ENCODE measurements at regions of chr12 and their contacts with region 1.

Region 1: GRCh38 chr12:48795480-48796455 is 6.9 kb upstream of the ADCY6 start:
- DNase-seq: peak in 8 of 9 donors; percentile 14 to 62 (median 48)
- ATAC-seq: peak; percentile 89
- H3K4me3 ChIP-seq: no peak overlapping the region
- H3K4me3 Mint-ChIP-seq: no peak overlapping the region
- H3K27ac ChIP-seq: no peak overlapping the region
- H3K27ac Mint-ChIP-seq: peak overlapping the region in 1 of 9 donors; percentile 52
- H3K4me1 ChIP-seq: no peaks in the 10 kb centered on the region
- H3K4me1 Mint-ChIP-seq: peaks cover 0 to 10% (median 4%) of the 10 kb centered on the region in 7 donors
- H3K27me3 ChIP-seq: no peaks in the 10 kb centered on the region
- H3K27me3 Mint-ChIP-seq: peaks cover 0 to 16% (median 3%) of the 10 kb centered on the region in 5 donors

Region 2: DNA sequence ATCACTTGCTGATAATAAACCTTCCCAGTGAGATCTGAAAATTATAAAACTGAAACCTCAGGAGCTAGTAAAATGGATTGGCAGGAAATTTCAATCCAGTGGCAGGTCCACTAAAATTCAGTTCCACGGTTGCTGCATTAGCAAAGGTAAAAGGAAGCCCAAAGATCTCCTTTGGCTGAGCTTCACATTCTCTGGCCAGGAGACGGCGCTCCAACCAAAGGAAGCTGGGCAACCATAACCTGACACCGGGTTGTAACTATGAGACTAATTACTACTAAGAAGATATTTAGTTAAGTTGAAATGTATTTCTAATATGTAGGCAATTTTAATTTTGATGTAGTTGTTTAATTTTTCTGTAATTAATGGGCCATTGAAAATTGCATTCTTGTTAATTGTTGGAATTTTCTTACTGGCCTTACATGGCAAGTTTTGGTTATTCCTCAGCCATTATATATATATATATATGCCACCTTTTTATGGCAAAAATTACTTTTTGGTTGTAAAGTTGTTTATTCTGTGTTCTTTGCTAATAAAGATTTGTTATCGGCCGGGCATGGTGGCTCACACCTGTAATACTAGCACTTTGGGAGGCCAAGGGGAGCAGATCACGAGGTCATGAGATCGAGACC is 253.4 kb before region 1 on chr12:
- CTCF ChIA-PET with region 1: interaction called, 8 read pairs
- POLR2A ChIA-PET with region 1: no interaction called
- intact Hi-C with region 1: loop called in 1 of 2 experiments (anchors 5 kb)
- DNase-seq: peak in 8 of 9 donors; percentile 22 to 45 (median 34)
- ATAC-seq: peak; percentile 47
- H3K4me3 ChIP-seq: no peak overlapping the region
- H3K4me3 Mint-ChIP-seq: no peak overlapping the region
- H3K27ac ChIP-seq: no peak overlapping the region
- H3K27ac Mint-ChIP-seq: no peak overlapping the region
- H3K4me1 ChIP-seq: no peaks in the 10 kb centered on the region
- H3K4me1 Mint-ChIP-seq: peaks cover 0 to 4% (median 0%) of the 10 kb centered on the region in 7 donors
- H3K27me3 ChIP-seq: no peaks in the 10 kb centered on the region
- H3K27me3 Mint-ChIP-seq: peaks cover 0 to 6% (median 3%) of the 10 kb centered on the region in 5 donors

Region 3: DNA sequence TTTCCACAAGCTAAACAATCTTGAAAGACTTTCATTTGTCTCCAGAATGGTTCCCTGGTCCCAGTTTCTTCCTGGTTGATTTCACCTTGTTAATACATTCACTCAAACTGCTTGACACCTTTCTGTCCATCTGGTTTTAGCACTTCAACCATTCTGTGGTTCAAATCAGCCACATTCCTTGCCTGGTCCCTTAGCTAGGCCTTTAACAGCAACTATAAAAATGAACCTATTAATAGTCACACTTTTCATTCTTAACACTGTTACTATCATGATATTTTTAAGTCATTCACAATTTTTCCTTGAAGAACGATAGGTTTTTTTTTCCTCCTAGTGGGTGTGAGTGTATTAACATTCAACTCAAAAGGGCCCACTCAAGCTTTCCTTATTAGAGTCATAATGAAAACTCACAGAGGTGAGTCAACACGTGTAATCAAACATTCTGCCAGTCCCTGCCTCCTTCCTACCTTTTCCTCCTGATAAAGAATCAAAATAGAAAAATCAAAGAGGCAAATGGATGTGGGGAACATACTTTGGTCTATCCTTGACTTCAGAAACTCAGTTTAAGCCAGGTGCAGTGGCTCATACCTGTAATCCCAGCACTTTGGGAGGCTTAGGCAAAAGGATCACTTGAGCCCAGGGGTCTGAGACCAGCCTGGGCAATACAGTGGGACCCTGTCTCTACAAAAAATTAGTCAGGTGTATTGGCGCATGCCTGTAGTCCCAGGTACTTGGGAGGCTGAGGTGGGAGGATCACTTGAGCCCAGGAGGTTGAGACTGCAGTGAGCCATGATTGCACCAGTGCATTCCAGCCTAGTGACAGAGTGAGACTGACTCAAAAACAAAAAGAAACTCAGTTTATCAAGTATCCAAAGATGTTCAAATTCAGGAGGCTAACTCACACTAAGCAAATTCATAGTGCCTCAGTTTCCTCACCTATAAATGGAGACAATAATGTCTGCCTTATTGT is 44.7 kb before region 1 on chr12:
- CTCF ChIA-PET with region 1: interaction called, 58 read pairs
- POLR2A ChIA-PET with region 1: interaction called, 7 read pairs
- intact Hi-C with region 1: loop called (anchors 1 kb)
- DNase-seq: no peak
- ATAC-seq: no peak
- H3K4me3 ChIP-seq: no peak overlapping the region
- H3K4me3 Mint-ChIP-seq: no peak overlapping the region
- H3K27ac ChIP-seq: no peak overlapping the region
- H3K27ac Mint-ChIP-seq: peak overlapping the region in 1 of 9 donors; percentile 20
- H3K4me1 ChIP-seq: no peaks in the 10 kb centered on the region
- H3K4me1 Mint-ChIP-seq: peaks cover 0 to 1% (median 0%) of the 10 kb centered on the region in 7 donors
- H3K27me3 ChIP-seq: no peaks in the 10 kb centered on the region
- H3K27me3 Mint-ChIP-seq: peaks cover 0 to 11% (median 0%) of the 10 kb centered on the region in 5 donors

Region 4: GRCh38 chr12:48758221-48758620 is 37.5 kb before region 1 on chr12:
- CTCF ChIA-PET with region 1: interaction called, 58 read pairs
- POLR2A ChIA-PET with region 1: interaction called, 7 read pairs
- intact Hi-C with region 1: loop called (anchors 1 kb)
- DNase-seq: no peak
- ATAC-seq: no peak
- H3K4me3 ChIP-seq: no peak overlapping the region
- H3K4me3 Mint-ChIP-seq: no peak overlapping the region
- H3K27ac ChIP-seq: no peak overlapping the region
- H3K27ac Mint-ChIP-seq: no peak overlapping the region
- H3K4me1 ChIP-seq: no peaks in the 10 kb centered on the region
- H3K4me1 Mint-ChIP-seq: peaks cover 0 to 1% (median 0%) of the 10 kb centered on the region in 7 donors
- H3K27me3 ChIP-seq: no peaks in the 10 kb centered on the region
- H3K27me3 Mint-ChIP-seq: peaks cover 0 to 3% (median 0%) of the 10 kb centered on the region in 5 donors

Region 5: GRCh38 chr12:48814262-48815125 is 18.7 kb after region 1 on chr12:
- CTCF ChIA-PET with region 1: interaction called, 3 read pairs
- POLR2A ChIA-PET with region 1: no interaction called
- intact Hi-C with region 1: loop called in 1 of 2 experiments (anchors 2 kb)
- DNase-seq: peak; percentile 18 to 93 (median 47)
- ATAC-seq: peak; percentile 86
- H3K4me3 ChIP-seq: peak overlapping the region; percentile 59
- H3K4me3 Mint-ChIP-seq: peak overlapping the region; percentile 58 to 95 (median 91)
- H3K27ac ChIP-seq: no peak overlapping the region
- H3K27ac Mint-ChIP-seq: peak overlapping the region in 4 of 9 donors; percentile 32 to 85 (median 66)
- H3K4me1 ChIP-seq: peaks cover 7 to 19% of the 10 kb centered on the region in 2 donors
- H3K4me1 Mint-ChIP-seq: peaks cover 18 to 39% (median 33%) of the 10 kb centered on the region in 7 donors
- H3K27me3 ChIP-seq: no peaks in the 10 kb centered on the region
- H3K27me3 Mint-ChIP-seq: peaks cover 0 to 23% (median 5%) of the 10 kb centered on the region in 5 donors

Measured in naive thymus-derived CD4-positive, alpha-beta T cell (primary cell).